ENCODE measurements at regions of chr5 and their contacts with region 1.

Region 1: GRCh38 chr5:94094793-94095441 is 353.5 kb upstream of the POU5F2 start:
- DNase-seq: no peak
- H3K4me3 ChIP-seq: no peak overlapping the region
- H3K27ac ChIP-seq: no peak overlapping the region
- H3K4me1 ChIP-seq: no peaks in the 10 kb centered on the region
- H3K27me3 ChIP-seq: no peaks in the 10 kb centered on the region
- CTCF ChIP-seq: no peak

Region 2: DNA sequence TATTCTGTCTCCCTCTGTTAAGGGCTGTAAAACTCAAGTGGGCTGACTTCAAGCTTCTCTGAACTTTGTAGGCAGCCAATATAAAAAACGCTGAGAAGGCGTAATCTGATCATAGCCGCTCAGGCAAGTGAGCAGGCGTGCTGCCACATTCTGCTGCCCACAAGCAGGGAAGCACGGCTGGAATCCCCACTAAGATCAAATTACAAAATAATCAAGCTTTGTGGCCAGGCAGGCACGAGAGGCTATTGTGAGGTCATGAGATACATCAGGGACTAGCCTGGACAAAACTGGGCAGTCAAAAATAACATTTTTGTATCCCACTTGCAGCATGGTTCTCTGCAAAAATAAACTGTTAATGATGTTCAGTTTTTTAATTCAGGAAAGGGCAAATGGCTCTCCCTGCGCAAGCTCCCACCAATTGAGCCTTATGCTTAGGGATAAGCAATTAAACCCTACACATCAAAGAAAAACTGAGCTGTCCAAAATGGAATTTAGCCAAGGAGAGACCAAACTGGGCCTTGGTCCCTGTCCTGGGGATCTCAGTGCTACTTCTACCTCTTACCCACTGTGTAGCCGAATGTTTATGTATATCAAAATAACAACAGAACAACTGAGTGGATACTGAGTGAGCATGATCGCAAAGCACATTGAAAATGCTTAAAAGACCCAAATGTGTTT is 417.4 kb before region 1 on chr5:
- CTCF ChIA-PET with region 1: no interaction called
- dilution Hi-C with region 1: no loop called
- in situ Hi-C with region 1: no loop called
- intact Hi-C with region 1: no loop called
- DNase-seq: peak; percentile 77
- H3K4me3 ChIP-seq: no peak overlapping the region
- H3K27ac ChIP-seq: no peak overlapping the region
- H3K4me1 ChIP-seq: no peaks in the 10 kb centered on the region
- H3K27me3 ChIP-seq: no peaks in the 10 kb centered on the region
- CTCF ChIP-seq: no peak

Region 3: GRCh38 chr5:94057217-94057616 is 37.7 kb before region 1 on chr5:
- CTCF ChIA-PET with region 1: no interaction called
- dilution Hi-C with region 1: loop called (anchors 5 kb)
- in situ Hi-C with region 1: no loop called
- intact Hi-C with region 1: no loop called
- DNase-seq: no peak
- H3K4me3 ChIP-seq: no peak overlapping the region
- H3K27ac ChIP-seq: no peak overlapping the region
- H3K4me1 ChIP-seq: no peaks in the 10 kb centered on the region
- H3K27me3 ChIP-seq: no peaks in the 10 kb centered on the region
- CTCF ChIP-seq: no peak

Measured in mammary epithelial cell (primary cell).